Activated T-helper 1 cell treated with anti-CD3 and anti-CD28 coated beads, Interleukin-12 subunit alpha, Interleukin-12 subunit beta, Interleukin-2, Interleukin-4 antibody, amounts not matched to agents 30 ng/mL and 10 ng/mL and 1 ng/mL, durations not matched to agents 14 hours and 24 hours and 36 hours (primary cell): ENCODE measurements at regions of chr21 and their contacts with region 1.

Region 1: GRCh38 chr21:35051287-35051818 is 2.3 kb upstream of the RUNX1 start:
- DNase-seq: peak; percentile 72
- H3K4me3 Mint-ChIP-seq: peak overlapping the region; percentile 93
- H3K27ac Mint-ChIP-seq: peak overlapping the region; percentile 83
- H3K4me1 Mint-ChIP-seq: peaks cover 52% of the 10 kb centered on the region
- H3K27me3 Mint-ChIP-seq: no peaks in the 10 kb centered on the region

Region 2: GRCh38 chr21:34946916-34947534 is 104.3 kb before region 1 on chr21:
- intact Hi-C with region 1: loop called (anchors 2 kb)
- DNase-seq: no peak
- H3K4me3 Mint-ChIP-seq: no peak overlapping the region
- H3K27ac Mint-ChIP-seq: peak overlapping the region; percentile 90
- H3K4me1 Mint-ChIP-seq: peaks cover 62% of the 10 kb centered on the region
- H3K27me3 Mint-ChIP-seq: no peaks in the 10 kb centered on the region

Region 3: GRCh38 chr21:35026617-35027562 is 24.5 kb before region 1 on chr21:
- intact Hi-C with region 1: loop called (anchors 1 kb)
- DNase-seq: peak; percentile 83
- H3K4me3 Mint-ChIP-seq: peak overlapping the region; percentile 85
- H3K27ac Mint-ChIP-seq: peak overlapping the region; percentile 99
- H3K4me1 Mint-ChIP-seq: peaks cover 91% of the 10 kb centered on the region
- H3K27me3 Mint-ChIP-seq: no peaks in the 10 kb centered on the region

Region 4: GRCh38 chr21:35150562-35151226 is 99.3 kb after region 1 on chr21:
- intact Hi-C with region 1: loop called (anchors 1 kb)
- DNase-seq: no peak
- H3K4me3 Mint-ChIP-seq: no peak overlapping the region
- H3K27ac Mint-ChIP-seq: peak overlapping the region; percentile 42
- H3K4me1 Mint-ChIP-seq: peaks cover 36% of the 10 kb centered on the region
- H3K27me3 Mint-ChIP-seq: no peaks in the 10 kb centered on the region

Region 5: GRCh38 chr21:35358008-35358407 is 306.7 kb after region 1 on chr21:
- intact Hi-C with region 1: loop called (anchors 1 kb)
- DNase-seq: no peak
- H3K4me3 Mint-ChIP-seq: no peak overlapping the region
- H3K27ac Mint-ChIP-seq: peak overlapping the region; percentile 56
- H3K4me1 Mint-ChIP-seq: peaks cover 7% of the 10 kb centered on the region
- H3K27me3 Mint-ChIP-seq: no peaks in the 10 kb centered on the region

Region 6: GRCh38 chr21:35616090-35616489 is 564.7 kb after region 1 on chr21:
- intact Hi-C with region 1: loop called (anchors 2 kb)
- DNase-seq: no peak
- H3K4me3 Mint-ChIP-seq: no peak overlapping the region
- H3K27ac Mint-ChIP-seq: no peak overlapping the region
- H3K4me1 Mint-ChIP-seq: peaks cover 7% of the 10 kb centered on the region
- H3K27me3 Mint-ChIP-seq: peaks cover 4% of the 10 kb centered on the region